Left cardiac atrium (tissue), 4 donors: ENCODE measurements at regions of chr2 and their contacts with region 1.

Region 1: GRCh38 chr2:96913398-96914202 is 43.7 kb upstream of the SEMA4C start:
- DNase-seq: no peak
- ATAC-seq: peak; percentile 36 to 48

Region 2: GRCh38 chr2:96869822-96870625 is 43.6 kb before region 1 on chr2 and contains the start of gene SEMA4C:
- intact Hi-C with region 1: loop called in 1 of 2 experiments (anchors 2 kb)
- DNase-seq: peak; percentile 74
- ATAC-seq: peak; percentile 47 to 60
- total RNA-seq, gene SEMA4C: 22.1 to 24.8 TPM